ENCODE measurements at regions of chr15 and their contacts with region 1.

Region 1: GRCh38 chr15:74937596-74938296 is at the start of gene COX5A:
- DNase-seq: peak; percentile 96
- ATAC-seq: peak; percentile 96
- H3K4me3 Mint-ChIP-seq: peak within 1 kb of the TSS; percentile 88
- H3K27ac Mint-ChIP-seq: peak within 1 kb of the TSS; percentile 91
- H3K4me1 Mint-ChIP-seq: peaks cover 31% of the 10 kb centered on the region
- H3K27me3 Mint-ChIP-seq: no peaks in the 10 kb centered on the region
- total RNA-seq, gene COX5A: 313 to 319 TPM

Region 2: DNA sequence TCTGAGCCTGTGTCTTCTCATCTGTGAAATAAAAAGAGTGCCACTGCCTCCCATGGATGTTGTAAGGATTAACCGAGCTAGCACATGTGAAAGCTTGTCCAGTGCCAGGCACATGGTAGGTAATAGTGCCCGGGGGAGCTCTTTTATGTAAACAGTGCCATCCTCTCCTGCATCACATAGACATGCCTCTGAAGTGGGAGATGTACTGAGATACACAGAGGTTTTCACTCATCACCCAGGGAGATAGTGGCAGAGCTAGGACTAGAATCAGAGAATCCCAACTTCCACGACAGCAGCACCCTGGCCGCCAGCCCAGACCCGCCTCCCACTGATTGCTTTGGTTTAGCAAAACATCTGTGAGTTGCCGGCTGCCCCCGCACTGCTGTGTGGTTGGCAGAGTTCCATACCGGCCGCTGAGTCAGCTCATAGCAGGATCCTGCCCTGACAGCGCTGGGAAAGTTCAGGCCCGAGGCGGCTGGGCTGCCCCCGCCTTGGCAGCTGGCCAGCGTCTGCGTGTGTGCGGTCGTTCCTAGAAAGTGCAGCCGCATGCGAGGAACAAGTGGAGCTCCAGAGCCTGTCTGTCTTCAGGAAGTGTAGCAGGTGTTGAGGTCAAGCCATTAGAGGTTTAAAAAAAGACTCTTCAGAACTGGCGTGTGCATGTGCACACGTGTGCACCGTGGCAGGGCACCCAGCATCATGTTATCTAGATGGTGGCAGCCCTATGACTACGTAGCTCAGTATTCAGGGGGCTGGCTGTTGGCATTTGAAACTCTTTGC is 391.7 kb before region 1 on chr15:
- CTCF ChIA-PET with region 1: no interaction called
- POLR2A ChIA-PET with region 1: no interaction called
- intact Hi-C with region 1: loop called in 1 of 2 experiments (anchors 2 kb)
- DNase-seq: peak; percentile 98
- ATAC-seq: peak; percentile 72
- H3K4me3 Mint-ChIP-seq: peak overlapping the region; percentile 29
- H3K27ac Mint-ChIP-seq: peak overlapping the region; percentile 44
- H3K4me1 Mint-ChIP-seq: peaks cover 62% of the 10 kb centered on the region
- H3K27me3 Mint-ChIP-seq: peaks cover 2% of the 10 kb centered on the region

Region 3: DNA sequence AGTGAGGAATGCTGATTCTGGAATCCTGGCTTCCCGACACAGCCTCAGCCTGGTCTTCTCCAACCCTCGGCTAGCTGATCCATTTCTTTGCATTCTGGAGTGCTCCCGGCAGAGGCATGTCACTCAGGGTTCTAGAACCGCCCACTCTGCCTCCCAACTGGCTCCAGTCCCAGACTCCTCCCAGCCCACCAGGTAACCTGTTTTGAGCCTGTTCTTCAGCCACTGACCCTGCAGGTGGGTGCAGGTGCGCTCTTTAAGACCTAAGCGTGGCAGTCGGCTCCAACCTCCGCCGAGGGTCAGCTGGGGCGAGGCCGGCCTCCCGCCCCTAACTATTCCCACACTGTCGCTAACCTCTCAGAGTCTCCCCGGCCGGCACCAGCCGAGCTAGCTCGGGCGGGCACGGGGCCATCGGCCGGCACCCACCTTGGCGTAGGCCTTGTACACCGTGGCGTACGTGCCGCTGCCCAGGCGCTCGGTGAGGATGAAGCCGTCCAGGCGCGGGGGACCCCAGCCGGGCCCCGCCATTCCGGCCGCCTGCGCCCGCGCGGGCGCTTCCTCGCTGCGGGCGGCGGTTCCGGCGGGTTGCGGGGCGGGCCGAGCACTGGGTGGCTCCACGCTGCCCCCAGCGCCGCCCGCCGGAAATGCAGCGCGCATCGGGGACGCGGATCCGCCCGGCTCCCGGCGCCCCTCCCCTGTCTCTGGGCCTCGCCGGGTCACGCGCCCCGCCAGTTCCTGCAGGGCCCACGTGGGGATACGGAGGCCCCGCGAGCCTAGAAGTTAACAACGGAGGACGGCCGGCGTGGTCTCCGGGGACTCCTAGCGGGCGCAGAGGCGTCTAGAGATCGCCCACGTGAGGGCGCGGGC is 94.9 kb before region 1 on chr15 and contains the start of gene ULK3:
- CTCF ChIA-PET with region 1: no interaction called
- POLR2A ChIA-PET with region 1: no interaction called
- intact Hi-C with region 1: loop called (anchors 1 to 2 kb)
- DNase-seq: peak; percentile 97
- ATAC-seq: peak; percentile 85
- H3K4me3 Mint-ChIP-seq: peak within 1 kb of the TSS; percentile 90
- H3K27ac Mint-ChIP-seq: peak within 1 kb of the TSS; percentile 90
- H3K4me1 Mint-ChIP-seq: peaks cover 45% of the 10 kb centered on the region
- H3K27me3 Mint-ChIP-seq: no peaks in the 10 kb centered on the region
- total RNA-seq, gene ULK3: 40.3 to 45.2 TPM

Region 4: GRCh38 chr15:74906446-74907162 is 31.1 kb before region 1 on chr15 and contains the start of gene FAM219B:
- CTCF ChIA-PET with region 1: interaction called, 10 read pairs
- POLR2A ChIA-PET with region 1: interaction called, 4 read pairs
- intact Hi-C with region 1: loop called (anchors 1 kb)
- DNase-seq: peak; percentile 88
- ATAC-seq: peak; percentile 88
- H3K4me3 Mint-ChIP-seq: peak within 1 kb of the TSS; percentile 92
- H3K27ac Mint-ChIP-seq: peak within 1 kb of the TSS; percentile 94
- H3K4me1 Mint-ChIP-seq: peaks cover 37% of the 10 kb centered on the region
- H3K27me3 Mint-ChIP-seq: no peaks in the 10 kb centered on the region
- total RNA-seq, gene FAM219B: 39.3 to 49.7 TPM

Region 5: GRCh38 chr15:74988007-74988800 is 50.5 kb after region 1 on chr15:
- CTCF ChIA-PET with region 1: no interaction called
- POLR2A ChIA-PET with region 1: no interaction called
- intact Hi-C with region 1: loop called in 1 of 2 experiments (anchors 1 kb)
- DNase-seq: peak; percentile 76
- ATAC-seq: peak; percentile 57
- H3K4me3 Mint-ChIP-seq: no peak overlapping the region
- H3K27ac Mint-ChIP-seq: no peak overlapping the region
- H3K4me1 Mint-ChIP-seq: peaks cover 16% of the 10 kb centered on the region
- H3K27me3 Mint-ChIP-seq: peaks cover 13% of the 10 kb centered on the region

Region 6: DNA sequence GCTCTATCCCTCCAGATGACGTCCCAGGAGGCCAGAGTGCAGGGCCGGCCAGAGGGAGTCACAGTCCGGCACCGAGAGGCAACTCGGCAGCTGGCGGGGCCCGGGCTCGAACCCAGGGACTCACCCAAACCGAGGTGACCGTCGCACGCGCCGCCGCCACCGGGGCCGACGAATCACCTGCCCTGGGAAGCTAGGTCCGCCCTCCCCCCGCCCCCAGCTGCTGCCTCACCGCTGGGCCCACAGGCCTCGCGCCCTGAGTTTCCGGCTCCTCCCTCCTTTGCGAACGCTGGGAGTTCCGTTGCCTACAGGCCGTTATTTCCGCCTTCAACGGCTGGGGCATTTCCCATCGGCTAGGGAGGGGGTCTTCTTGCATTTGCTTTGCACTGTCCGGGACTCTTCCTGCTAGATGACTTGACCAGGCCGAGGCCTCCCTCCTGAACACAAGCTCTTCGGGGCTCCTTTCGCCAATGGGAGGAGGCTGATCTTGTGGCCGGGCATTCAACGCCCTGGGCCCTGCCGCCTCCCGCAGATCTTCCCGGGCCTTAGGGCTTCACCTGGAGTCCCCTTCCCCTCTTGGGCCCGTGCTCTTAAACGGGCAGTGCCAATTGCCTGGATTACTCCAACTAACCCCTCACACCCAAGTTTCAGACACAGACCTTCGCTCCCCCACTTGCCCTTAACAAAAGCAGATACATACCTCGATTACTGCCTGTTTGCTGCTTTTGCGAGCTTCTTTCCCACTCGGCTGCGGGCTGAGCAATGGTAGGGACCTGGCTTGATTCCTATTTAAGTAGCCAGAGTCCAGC is 688.0 kb after region 1 on chr15 and contains the start of gene SNUPN:
- CTCF ChIA-PET with region 1: no interaction called
- POLR2A ChIA-PET with region 1: no interaction called
- intact Hi-C with region 1: loop called in 1 of 2 experiments (anchors 1 kb)
- DNase-seq: peak; percentile 97
- ATAC-seq: peak; percentile 88
- H3K4me3 Mint-ChIP-seq: peak within 1 kb of the TSS; percentile 93
- H3K27ac Mint-ChIP-seq: peak within 1 kb of the TSS; percentile 99
- H3K4me1 Mint-ChIP-seq: peaks cover 45% of the 10 kb centered on the region
- H3K27me3 Mint-ChIP-seq: no peaks in the 10 kb centered on the region
- total RNA-seq, gene SNUPN: 37.4 to 40.3 TPM

Region 7: DNA sequence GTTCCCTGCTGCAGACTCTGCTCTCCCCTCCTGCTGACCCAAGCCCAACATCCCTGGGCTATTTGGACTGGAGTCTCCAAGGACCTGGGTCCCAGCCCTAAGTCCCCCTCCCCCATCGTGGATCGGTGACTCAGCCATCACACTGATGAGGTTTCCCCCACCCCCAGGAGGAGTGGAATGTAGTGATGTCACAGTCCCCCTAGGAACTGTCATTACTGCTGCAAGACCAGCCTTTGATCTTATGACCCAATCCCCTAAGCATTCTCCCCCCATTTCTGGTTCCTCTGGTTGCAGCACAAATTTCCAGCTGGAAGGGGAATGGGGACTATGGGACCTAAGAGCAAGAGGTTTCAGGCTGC is 838.3 kb after region 1 on chr15:
- CTCF ChIA-PET with region 1: no interaction called
- POLR2A ChIA-PET with region 1: no interaction called
- intact Hi-C with region 1: no loop called
- DNase-seq: peak; percentile 22
- ATAC-seq: no peak
- H3K4me3 Mint-ChIP-seq: no peak overlapping the region
- H3K27ac Mint-ChIP-seq: no peak overlapping the region
- H3K4me1 Mint-ChIP-seq: peaks cover 11% of the 10 kb centered on the region
- H3K27me3 Mint-ChIP-seq: peaks cover 2% of the 10 kb centered on the region